ENCODE measurements at regions of chr15 and their contacts with region 1.

Region 1: DNA sequence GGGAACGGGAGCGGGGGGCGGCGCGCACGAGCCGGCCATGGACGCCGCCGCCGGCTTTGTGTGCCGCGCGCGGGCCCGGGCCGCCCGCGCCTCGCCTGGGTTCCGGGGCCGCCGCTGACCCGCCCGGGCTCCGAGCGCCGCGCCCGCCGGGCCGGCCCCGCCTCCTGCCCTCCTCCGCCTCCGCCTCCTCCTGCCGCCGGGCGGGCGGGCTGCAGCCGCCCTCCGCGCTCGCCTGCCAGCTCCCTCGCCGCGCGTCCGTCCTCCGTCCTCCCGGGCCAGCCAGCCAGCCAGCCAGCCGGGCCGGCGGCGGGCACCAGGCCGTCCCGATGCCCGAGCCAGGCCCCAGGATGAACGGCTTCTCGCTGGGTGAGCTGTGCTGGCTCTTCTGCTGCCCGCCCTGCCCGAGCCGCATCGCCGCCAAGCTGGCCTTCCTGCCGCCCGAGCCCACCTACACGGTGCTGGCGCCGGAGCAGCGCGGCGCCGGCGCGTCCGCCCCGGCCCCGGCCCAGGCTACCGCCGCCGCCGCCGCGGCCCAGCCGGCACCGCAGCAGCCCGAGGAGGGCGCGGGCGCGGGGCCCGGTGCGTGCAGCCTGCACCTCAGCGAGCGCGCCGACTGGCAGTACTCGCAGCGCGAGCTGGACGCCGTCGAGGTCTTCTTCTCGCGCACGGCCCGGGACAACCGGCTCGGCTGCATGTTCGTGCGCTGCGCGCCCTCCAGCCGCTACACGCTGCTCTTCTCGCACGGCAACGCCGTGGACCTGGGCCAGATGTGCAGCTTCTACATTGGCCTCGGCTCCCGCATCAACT is at the start of gene ABHD17C:
- DNase-seq: peak in 1 of 2 experiments; percentile 81
- H3K4me3 ChIP-seq: peak within 1 kb of the TSS; percentile 69 to 78 (median 72)
- H3K27ac ChIP-seq: no peak within 1 kb of the TSS; the same call in 1 of the 2 replicates
- H3K4me1 ChIP-seq: peaks cover 5 to 9% (median 8%) of the 10 kb centered on the region in 4 experiments; a peak in 5 of 7 replicates
- H3K27me3 ChIP-seq: peaks cover 0 to 22% (median 7%) of the 10 kb centered on the region in 4 experiments; a peak in 5 of 7 replicates
- CTCF ChIP-seq: no peak
- EP300 ChIP-seq: no peak
- POLR2A ChIP-seq: peak; percentile 33 to 41; a peak in 2 of 3 replicates
- RAD21 ChIP-seq: peak in 1 of 2 experiments; percentile 1; a peak in 1 of 4 replicates
- total RNA-seq, gene ABHD17C: 29.8 and 31.8 TPM in 2 replicates

Region 2: GRCh38 chr15:80706161-80706560 is 10.9 kb after region 1 on chr15:
- CTCF ChIA-PET with region 1: interaction called, 16 read pairs
- POLR2A ChIA-PET with region 1: interaction called, 14 read pairs
- DNase-seq: no peak
- H3K4me3 ChIP-seq: peak overlapping the region in 1 of 4 experiments; percentile 20; a peak in 1 of 8 replicates
- H3K27ac ChIP-seq: no peak overlapping the region
- H3K4me1 ChIP-seq: peaks cover 0 to 10% (median 7%) of the 10 kb centered on the region in 4 experiments; a peak in 4 of 7 replicates
- H3K27me3 ChIP-seq: no peaks in the 10 kb centered on the region
- CTCF ChIP-seq: no peak
- EP300 ChIP-seq: no peak
- POLR2A ChIP-seq: no peak
- RAD21 ChIP-seq: no peak